Posterior vena cava (tissue), 2 donors: ENCODE measurements at regions of chr16 and their contacts with region 1.

Region 1: GRCh38 chr16:88076211-88076931 is 125.1 kb downstream of the BANP start:
- DNase-seq: peak; percentile 72

Region 2: GRCh38 chr16:87860553-87861299 is 215.6 kb before region 1 on chr16:
- intact Hi-C with region 1: no loop called
- DNase-seq: no peak

Region 3: DNA sequence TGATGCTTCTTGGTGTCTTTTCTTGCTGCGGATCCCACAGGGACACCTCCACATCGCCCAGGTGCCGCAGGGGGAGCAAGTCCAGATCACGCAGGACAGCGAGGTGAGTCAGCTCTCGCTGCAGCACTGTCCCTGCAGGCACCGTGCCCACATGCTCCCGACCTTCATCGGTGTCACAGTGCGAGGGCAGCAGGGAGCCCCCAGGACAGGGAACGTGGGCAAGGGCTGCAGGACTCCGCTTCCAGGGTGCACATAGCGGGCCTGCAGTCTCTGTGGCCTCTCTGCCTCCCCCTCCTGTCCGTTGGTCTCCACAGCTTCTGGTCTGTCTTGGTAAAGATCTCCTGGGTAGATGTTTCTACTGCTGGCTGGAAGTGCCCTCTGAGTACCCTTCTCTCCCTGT is 41.1 kb before region 1 on chr16:
- intact Hi-C with region 1: no loop called
- DNase-seq: peak; percentile 71

Region 4: DNA sequence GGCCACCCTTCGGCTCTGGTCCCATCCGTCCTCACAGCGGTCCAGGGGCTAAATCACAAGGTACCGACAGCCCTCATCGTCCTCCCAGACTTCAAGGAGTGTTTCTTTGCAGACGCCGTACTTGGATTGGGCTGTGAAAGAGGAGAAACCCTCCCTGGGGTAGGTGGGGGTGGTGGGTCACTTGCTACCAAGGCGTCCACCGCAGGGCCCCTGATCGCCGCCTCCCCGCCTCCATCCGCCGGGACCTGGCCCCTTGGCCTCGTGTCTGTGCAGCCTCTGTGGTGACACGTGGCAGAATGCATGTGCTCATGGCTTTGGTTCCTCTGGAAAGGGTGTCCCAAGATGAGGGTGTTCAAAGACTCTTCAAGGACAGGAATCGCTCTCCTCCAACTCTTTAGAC is 26.2 kb after region 1 on chr16:
- intact Hi-C with region 1: loop called in 1 of 2 experiments (anchors 1 kb)
- DNase-seq: peak; percentile 78